ENCODE measurements at regions of chr1 and their contacts with region 1.

Region 1: GRCh38 chr1:32538887-32539583 is at the start of gene ZBTB8A:
- DNase-seq: peak; percentile 21
- H3K4me3 Mint-ChIP-seq: peak within 1 kb of the TSS; percentile 77
- H3K27ac Mint-ChIP-seq: no peak within 1 kb of the TSS
- H3K4me1 Mint-ChIP-seq: peaks cover 8% of the 10 kb centered on the region
- H3K27me3 Mint-ChIP-seq: peaks cover 64% of the 10 kb centered on the region
- total RNA-seq, gene ZBTB8A: 0.21 to 0.35 TPM

Region 2: GRCh38 chr1:32448773-32449456 is 90.1 kb before region 1 on chr1:
- CTCF ChIA-PET with region 1: no interaction called
- intact Hi-C with region 1: no loop called
- DNase-seq: no peak
- H3K4me3 Mint-ChIP-seq: no peak overlapping the region
- H3K27ac Mint-ChIP-seq: no peak overlapping the region
- H3K4me1 Mint-ChIP-seq: no peaks in the 10 kb centered on the region
- H3K27me3 Mint-ChIP-seq: peaks cover 19% of the 10 kb centered on the region

Region 3: GRCh38 chr1:32619701-32620485 is 80.9 kb after region 1 on chr1:
- CTCF ChIA-PET with region 1: no interaction called
- intact Hi-C with region 1: loop called (anchors 5 kb)
- DNase-seq: no peak
- H3K4me3 Mint-ChIP-seq: no peak overlapping the region
- H3K27ac Mint-ChIP-seq: no peak overlapping the region
- H3K4me1 Mint-ChIP-seq: peaks cover 36% of the 10 kb centered on the region
- H3K27me3 Mint-ChIP-seq: no peaks in the 10 kb centered on the region